HAP-1 (cell line): ENCODE measurements at regions of chr16 and their contacts with region 1.

Region 1: DNA sequence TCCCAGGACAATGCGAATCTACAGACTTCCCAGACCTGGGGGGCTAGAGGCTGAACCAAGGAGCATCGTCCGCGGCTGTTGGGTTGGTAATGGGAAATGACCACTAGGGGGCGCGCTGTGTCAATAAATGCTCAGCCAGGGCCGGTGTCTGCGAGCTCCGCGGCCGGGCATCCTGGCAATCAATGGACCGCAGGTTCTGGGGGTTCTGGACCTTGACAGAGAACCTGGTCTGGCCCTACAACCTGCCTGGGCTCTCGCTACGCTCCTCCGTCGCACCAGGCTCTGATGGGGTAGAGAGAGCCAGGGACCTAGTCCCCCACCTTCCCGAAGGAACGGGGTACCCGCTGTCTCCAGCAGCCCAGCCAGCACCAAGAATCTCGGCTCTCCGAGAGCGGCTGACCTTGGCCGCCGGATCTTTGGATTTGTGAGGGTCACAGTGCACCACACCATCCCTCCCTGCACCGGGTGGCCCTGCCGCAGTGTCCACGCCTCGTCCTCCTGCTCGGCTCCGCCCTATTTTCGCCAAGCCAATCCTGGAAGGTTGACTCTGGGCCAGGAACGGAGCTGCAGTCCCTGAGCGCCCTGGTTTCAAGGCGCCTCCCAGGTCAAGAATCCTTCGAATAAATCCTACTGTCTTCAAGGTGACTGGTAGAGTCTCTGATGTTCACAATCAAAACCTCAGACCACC is 20.4 kb upstream of the BEAN1 start:
- DNase-seq: peak; percentile 51 to 91
- H3K4me3 ChIP-seq: peak overlapping the region; percentile 47
- H3K4me1 ChIP-seq: peaks cover 3% of the 10 kb centered on the region
- H3K27me3 ChIP-seq: no peaks in the 10 kb centered on the region

Region 2: GRCh38 chr16:66604376-66605176 is 197.9 kb after region 1 on chr16 and contains the start of gene CMTM3:
- in situ Hi-C with region 1: loop called (anchors 5 kb)
- DNase-seq: peak; percentile 76 to 89
- H3K4me3 ChIP-seq: peak within 1 kb of the TSS; percentile 83
- H3K4me1 ChIP-seq: peaks cover 17% of the 10 kb centered on the region
- H3K27me3 ChIP-seq: no peaks in the 10 kb centered on the region

Region 3: DNA sequence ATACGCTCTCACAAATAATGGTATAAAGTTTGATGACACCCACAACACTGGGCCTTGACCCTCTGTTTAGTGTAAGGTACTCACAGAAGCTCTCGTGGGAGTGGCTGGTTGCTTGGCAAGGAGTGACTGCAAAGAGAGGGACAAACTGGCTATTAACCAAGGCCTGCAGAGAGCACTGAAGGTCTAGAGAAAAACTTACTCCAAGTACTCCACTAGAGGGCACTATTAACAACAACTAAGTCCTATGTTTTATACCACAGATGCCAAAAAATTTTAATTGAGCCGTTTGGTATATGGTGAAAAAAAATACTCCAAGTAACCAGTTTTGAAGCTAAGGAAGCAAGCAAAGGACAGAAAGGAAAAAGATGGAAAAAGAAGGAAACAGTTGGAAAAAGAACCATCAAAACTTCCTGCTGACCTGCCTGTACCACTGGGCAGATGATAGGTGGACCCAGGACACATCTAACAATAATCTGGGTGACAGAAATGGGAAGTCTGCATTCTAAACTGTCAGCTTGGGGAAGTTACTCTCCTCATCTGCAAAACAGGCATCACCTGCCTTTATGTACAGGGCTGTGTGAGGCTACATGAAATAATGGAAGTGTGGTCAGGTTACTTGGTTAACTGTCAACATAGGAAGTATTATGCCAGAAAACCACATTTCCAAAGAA is 321.6 kb after region 1 on chr16:
- in situ Hi-C with region 1: loop called (anchors 25 kb)
- DNase-seq: peak in 1 of 2 experiments; percentile 49
- H3K4me3 ChIP-seq: no peak overlapping the region
- H3K4me1 ChIP-seq: no peaks in the 10 kb centered on the region
- H3K27me3 ChIP-seq: no peaks in the 10 kb centered on the region

Region 4: GRCh38 chr16:66859397-66860068 is 452.9 kb after region 1 on chr16:
- in situ Hi-C with region 1: loop called (anchors 10 kb)
- DNase-seq: no peak
- H3K4me3 ChIP-seq: no peak overlapping the region
- H3K4me1 ChIP-seq: no peaks in the 10 kb centered on the region
- H3K27me3 ChIP-seq: no peaks in the 10 kb centered on the region